Heart left ventricle (tissue), 16 donors: ENCODE measurements at regions of chr12 and their contacts with region 1.

Region 1: GRCh38 chr12:45268672-45269411 is 52.9 kb downstream of the ANO6 start:
- DNase-seq: peak; percentile 84 to 89 (median 87)
- ATAC-seq: peak; percentile 59 to 77 (median 71)
- H3K4me3 ChIP-seq: peak overlapping the region in 6 of 12 donors; percentile 3 to 28 (median 8)
- H3K27ac ChIP-seq: peak overlapping the region in 11 of 12 donors; percentile 10 to 71 (median 45)
- H3K4me1 ChIP-seq: peaks cover 13 to 66% (median 45%) of the 10 kb centered on the region in 12 donors
- H3K27me3 ChIP-seq: no peaks in the 10 kb centered on the region
- CTCF ChIP-seq: peak in 11 of 12 donors; percentile 24 to 67 (median 55)
- POLR2A ChIP-seq: no peak

Region 2: GRCh38 chr12:44500423-44500822 is 768.4 kb before region 1 on chr12:
- intact Hi-C with region 1: no loop called
- DNase-seq: no peak
- ATAC-seq: peak in 1 of 4 donors; percentile 20
- H3K4me3 ChIP-seq: no peak overlapping the region
- H3K27ac ChIP-seq: no peak overlapping the region
- H3K4me1 ChIP-seq: no peaks in the 10 kb centered on the region
- H3K27me3 ChIP-seq: no peaks in the 10 kb centered on the region
- CTCF ChIP-seq: no peak
- POLR2A ChIP-seq: no peak

Region 3: DNA sequence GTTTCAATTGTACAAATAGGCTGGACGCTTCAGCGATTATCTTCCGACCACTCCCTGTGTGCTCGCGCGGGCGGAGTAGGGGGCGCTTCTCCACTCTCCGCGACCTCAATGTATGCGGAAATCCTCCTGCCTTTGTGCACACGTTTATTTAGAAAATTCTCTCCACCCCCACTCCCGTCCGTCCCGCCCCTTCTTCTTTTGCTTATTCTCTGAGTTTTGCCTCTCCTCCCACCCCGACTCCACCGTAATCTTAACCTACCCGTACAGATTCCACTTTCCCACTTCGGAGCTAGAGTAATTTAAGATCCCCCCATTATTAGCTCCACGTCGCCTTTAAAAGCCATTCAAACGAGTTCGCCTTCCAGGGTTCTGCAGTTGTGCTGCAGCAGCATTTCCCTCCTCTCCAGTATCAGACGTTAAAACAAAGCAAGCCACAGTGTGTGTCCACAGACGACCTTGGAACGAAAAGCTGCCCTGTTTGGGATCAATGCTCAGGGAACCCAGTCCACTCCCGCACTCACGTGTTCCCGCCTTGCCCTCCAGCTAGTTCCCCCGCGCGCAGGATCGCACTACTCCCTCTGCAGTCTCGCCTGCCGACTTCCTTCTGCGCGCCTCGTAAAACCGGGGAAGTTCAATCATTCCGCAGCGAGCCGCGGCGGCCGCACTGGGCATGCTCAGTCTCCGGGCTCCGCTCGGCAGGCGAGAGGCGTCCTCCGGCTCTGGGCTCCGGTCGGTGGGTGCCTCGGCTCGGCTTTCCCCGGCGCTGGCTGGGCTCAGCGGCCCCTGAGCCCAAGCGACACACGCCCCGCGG is 53.2 kb before region 1 on chr12 and contains the start of gene ANO6:
- intact Hi-C with region 1: loop called in 6 of 10 experiments (anchors 2 to 10 kb)
- DNase-seq: peak; percentile 91 to 94 (median 92)
- ATAC-seq: peak; percentile 90 to 97 (median 96)
- H3K4me3 ChIP-seq: peak within 1 kb of the TSS; percentile 61 to 97 (median 90)
- H3K27ac ChIP-seq: peak within 1 kb of the TSS; percentile 83 to 99 (median 94)
- H3K4me1 ChIP-seq: peaks cover 4 to 39% (median 28%) of the 10 kb centered on the region in 12 donors
- H3K27me3 ChIP-seq: no peaks in the 10 kb centered on the region
- CTCF ChIP-seq: peak in 4 of 12 donors; percentile 19 to 35 (median 29)
- POLR2A ChIP-seq: peak in 1 of 2 donors; percentile 76
- total RNA-seq, gene ANO6: 29.1 to 57.2 (median 46.7) TPM

Region 4: DNA sequence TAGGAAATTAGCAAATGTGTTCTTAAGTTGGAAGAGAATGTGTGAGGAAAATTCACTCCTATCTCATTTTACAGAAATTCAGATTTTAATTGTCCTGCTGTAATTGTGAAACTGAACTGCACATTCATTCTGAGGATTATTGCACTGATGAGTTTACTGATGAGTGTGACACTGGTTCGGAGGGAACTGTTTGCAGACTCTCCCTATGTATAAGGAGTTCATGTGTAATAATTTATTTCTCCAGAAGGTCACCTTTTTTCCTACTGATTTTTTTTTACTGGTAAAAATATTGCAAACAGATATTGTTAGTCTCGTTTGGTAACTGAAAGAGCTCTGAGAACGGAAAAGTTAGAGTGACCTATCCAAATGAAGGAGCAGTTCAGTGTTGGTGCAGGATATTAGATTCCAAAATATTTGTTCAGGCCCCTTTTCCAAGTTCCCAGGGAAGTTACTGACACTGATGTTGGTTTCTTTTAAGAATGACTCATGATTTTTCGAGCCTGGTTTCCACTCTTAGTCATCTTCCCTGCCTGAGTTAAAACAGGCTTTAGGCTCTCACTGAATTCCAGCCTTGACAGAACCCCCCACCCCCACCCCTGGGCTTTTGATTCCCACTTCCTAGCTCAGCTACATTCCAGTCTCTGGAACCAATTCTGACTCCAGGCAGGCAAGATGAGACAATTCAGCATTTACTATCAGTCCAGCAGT is 34.5 kb before region 1 on chr12:
- intact Hi-C with region 1: loop called in 1 of 10 experiments (anchors 5 kb)
- DNase-seq: peak in 3 of 5 donors; percentile 35 to 53 (median 47)
- ATAC-seq: peak; percentile 68 to 91 (median 90)
- H3K4me3 ChIP-seq: peak overlapping the region in 4 of 12 donors; percentile 6 to 12 (median 9)
- H3K27ac ChIP-seq: peak overlapping the region; percentile 66 to 93 (median 81)
- H3K4me1 ChIP-seq: peaks cover 12 to 57% (median 47%) of the 10 kb centered on the region in 12 donors
- H3K27me3 ChIP-seq: no peaks in the 10 kb centered on the region
- CTCF ChIP-seq: no peak
- POLR2A ChIP-seq: no peak

Region 5: GRCh38 chr12:45324391-45324790 is 55.5 kb after region 1 on chr12:
- intact Hi-C with region 1: loop called in 1 of 10 experiments (anchors 5 kb)
- DNase-seq: no peak
- ATAC-seq: peak in 3 of 4 donors; percentile 62 to 80 (median 62)
- H3K4me3 ChIP-seq: no peak overlapping the region
- H3K27ac ChIP-seq: peak overlapping the region in 3 of 12 donors; percentile 11 to 30 (median 22)
- H3K4me1 ChIP-seq: peaks cover 4 to 51% (median 25%) of the 10 kb centered on the region in 12 donors
- H3K27me3 ChIP-seq: no peaks in the 10 kb centered on the region
- CTCF ChIP-seq: no peak
- POLR2A ChIP-seq: no peak

Region 6: GRCh38 chr12:45336331-45337064 is 67.7 kb after region 1 on chr12:
- intact Hi-C with region 1: loop called in 2 of 10 experiments (anchors 5 to 10 kb)
- DNase-seq: no peak
- ATAC-seq: no peak
- H3K4me3 ChIP-seq: no peak overlapping the region
- H3K27ac ChIP-seq: peak overlapping the region in 2 of 12 donors; percentile 2 to 88
- H3K4me1 ChIP-seq: peaks cover 0 to 37% (median 14%) of the 10 kb centered on the region in 12 donors
- H3K27me3 ChIP-seq: no peaks in the 10 kb centered on the region
- CTCF ChIP-seq: no peak
- POLR2A ChIP-seq: no peak

Region 7: GRCh38 chr12:45388545-45388944 is 119.7 kb after region 1 on chr12:
- intact Hi-C with region 1: loop called in 7 of 10 experiments (anchors 2 to 10 kb)
- DNase-seq: peak in 2 of 5 donors; percentile 22 to 28
- ATAC-seq: peak in 3 of 4 donors; percentile 48 to 71 (median 60)
- H3K4me3 ChIP-seq: no peak overlapping the region
- H3K27ac ChIP-seq: peak overlapping the region in 1 of 12 donors; percentile 40
- H3K4me1 ChIP-seq: peaks cover 0 to 5% (median 0%) of the 10 kb centered on the region in 12 donors
- H3K27me3 ChIP-seq: no peaks in the 10 kb centered on the region
- CTCF ChIP-seq: peak; percentile 37 to 76 (median 60)
- POLR2A ChIP-seq: no peak